PC-3 (cell line): ENCODE measurements at regions of chr2 and their contacts with region 1.

Region 1: DNA sequence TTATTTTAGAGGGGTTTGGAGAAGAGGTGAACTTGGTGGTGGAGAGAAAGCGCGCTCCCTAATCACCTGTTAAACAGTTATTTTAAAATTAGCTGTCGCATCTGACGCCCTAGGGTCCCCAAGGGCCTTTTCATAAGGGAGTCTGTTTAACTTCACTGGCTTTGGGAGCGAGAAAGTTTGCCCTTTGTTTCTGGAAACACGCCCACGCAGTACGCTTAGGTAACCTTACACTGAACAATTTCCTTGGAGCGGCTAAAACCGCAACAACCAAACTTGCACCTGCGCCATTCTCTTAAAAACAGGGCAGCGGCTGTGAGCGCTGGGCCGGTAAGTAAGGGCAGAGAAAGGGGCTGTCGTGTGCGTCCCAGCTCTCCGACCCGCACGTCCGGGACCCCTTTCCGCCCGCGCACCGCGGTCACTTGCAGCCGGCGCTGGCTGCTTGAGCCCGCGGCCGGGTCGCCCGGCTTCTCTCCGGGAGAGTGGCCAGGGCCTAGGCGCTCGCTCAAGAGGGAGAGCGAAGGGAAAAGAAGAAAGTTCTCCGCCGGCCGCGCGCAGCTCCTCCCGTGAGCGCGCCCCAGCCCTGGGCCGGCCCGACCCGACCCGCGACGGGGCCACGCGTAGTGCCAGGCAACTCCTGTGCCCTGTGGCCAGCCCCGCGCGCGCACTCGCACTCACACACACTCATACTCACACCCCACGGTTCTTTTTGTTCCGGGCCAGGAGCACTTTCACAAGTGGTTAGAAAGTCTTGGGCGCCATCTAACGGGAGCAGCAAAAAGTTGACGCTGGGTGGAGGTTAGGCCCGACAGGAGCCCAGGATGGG is 19.2 kb downstream of the POU3F3 start:
- DNase-seq: peak; percentile 67
- ATAC-seq: peak; percentile 94
- H3K4me3 ChIP-seq: peak overlapping the region; percentile 70
- H3K27ac ChIP-seq: no peak overlapping the region
- H3K4me1 ChIP-seq: peaks cover 5% of the 10 kb centered on the region; the same call in 1 of the 2 replicates
- H3K27me3 ChIP-seq: peaks cover 73% of the 10 kb centered on the region
- CTCF ChIP-seq: peak; percentile 75

Region 2: GRCh38 chr2:103959174-103960128 is 913.6 kb before region 1 on chr2:
- CTCF ChIA-PET with region 1: no interaction called
- POLR2A ChIA-PET with region 1: no interaction called
- intact Hi-C with region 1: loop called (anchors 5 kb)
- DNase-seq: peak; percentile 48
- ATAC-seq: peak; percentile 77
- H3K4me3 ChIP-seq: no peak overlapping the region
- H3K27ac ChIP-seq: no peak overlapping the region
- H3K4me1 ChIP-seq: no peaks in the 10 kb centered on the region
- H3K27me3 ChIP-seq: peaks cover 30% of the 10 kb centered on the region; the same call in 1 of the 2 replicates
- CTCF ChIP-seq: peak; percentile 73

Region 3: DNA sequence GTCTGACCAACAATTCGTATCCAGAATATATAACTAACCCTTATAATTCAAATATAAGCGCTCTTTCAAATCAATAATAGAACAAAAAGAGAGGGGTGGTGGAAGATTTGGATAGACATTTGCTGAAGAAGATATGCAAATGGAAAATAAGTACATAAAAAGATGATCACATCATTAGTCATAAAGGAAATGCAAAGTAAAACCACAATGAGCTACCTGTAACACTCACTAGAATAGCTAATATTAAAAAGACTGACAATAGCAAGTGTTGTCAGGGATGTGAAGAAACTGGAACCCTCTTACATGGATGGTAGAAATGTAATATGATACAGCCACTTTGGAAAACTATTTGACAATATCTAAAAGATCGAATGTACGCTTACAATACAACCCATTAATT is 79.9 kb after region 1 on chr2:
- CTCF ChIA-PET with region 1: no interaction called
- POLR2A ChIA-PET with region 1: no interaction called
- intact Hi-C with region 1: no loop called
- DNase-seq: peak; percentile 53
- ATAC-seq: peak; percentile 35; the same call in 1 of the 2 replicates
- H3K4me3 ChIP-seq: no peak overlapping the region
- H3K27ac ChIP-seq: no peak overlapping the region
- H3K4me1 ChIP-seq: peaks cover 3% of the 10 kb centered on the region; the same call in 1 of the 2 replicates
- H3K27me3 ChIP-seq: peaks cover 24% of the 10 kb centered on the region
- CTCF ChIP-seq: no peak

Region 4: DNA sequence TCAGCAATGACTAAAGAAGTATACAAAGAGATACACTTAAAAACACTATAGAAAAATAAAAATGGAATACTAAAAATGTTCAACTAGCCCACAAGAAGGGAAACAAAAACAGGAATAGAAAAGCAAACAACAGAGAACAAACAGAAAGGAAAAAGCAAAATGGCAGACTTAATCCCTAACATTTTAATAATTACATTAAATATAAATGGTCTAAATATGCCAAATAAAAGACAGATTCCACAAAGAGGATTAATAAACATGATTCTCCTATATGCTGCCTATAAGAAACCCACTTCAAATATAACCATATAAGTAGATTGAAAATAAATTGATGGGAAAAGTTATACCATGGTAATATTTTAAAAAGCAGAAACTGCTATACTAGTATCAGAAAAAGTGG is 284.9 kb after region 1 on chr2:
- CTCF ChIA-PET with region 1: no interaction called
- POLR2A ChIA-PET with region 1: no interaction called
- intact Hi-C with region 1: no loop called
- DNase-seq: no peak
- ATAC-seq: no peak
- H3K4me3 ChIP-seq: no peak overlapping the region
- H3K27ac ChIP-seq: no peak overlapping the region
- H3K4me1 ChIP-seq: no peaks in the 10 kb centered on the region
- H3K27me3 ChIP-seq: peaks cover 72% of the 10 kb centered on the region
- CTCF ChIP-seq: no peak

Region 5: GRCh38 chr2:105168543-105168942 is 295.5 kb after region 1 on chr2:
- CTCF ChIA-PET with region 1: no interaction called
- POLR2A ChIA-PET with region 1: no interaction called
- intact Hi-C with region 1: no loop called
- DNase-seq: no peak
- ATAC-seq: no peak
- H3K4me3 ChIP-seq: no peak overlapping the region
- H3K27ac ChIP-seq: no peak overlapping the region
- H3K4me1 ChIP-seq: no peaks in the 10 kb centered on the region
- H3K27me3 ChIP-seq: peaks cover 68% of the 10 kb centered on the region
- CTCF ChIP-seq: no peak